Activated T-helper 1 cell treated with anti-CD3 and anti-CD28 coated beads, Interleukin-12 subunit alpha, Interleukin-12 subunit beta, Interleukin-2, Interleukin-4 antibody, amounts not matched to agents 30 ng/mL and 10 ng/mL and 1 ng/mL, durations not matched to agents 14 hours and 24 hours and 36 hours (primary cell): ENCODE measurements at regions of chr12 and their contacts with region 1.

Region 1: GRCh38 chr12:14769969-14770495 is 33.2 kb downstream of the WBP11 start:
- DNase-seq: peak; percentile 79
- H3K4me3 Mint-ChIP-seq: peak overlapping the region; percentile 86
- H3K27ac Mint-ChIP-seq: peak overlapping the region; percentile 97
- H3K4me1 Mint-ChIP-seq: peaks cover 61% of the 10 kb centered on the region
- H3K27me3 Mint-ChIP-seq: no peaks in the 10 kb centered on the region

Region 2: DNA sequence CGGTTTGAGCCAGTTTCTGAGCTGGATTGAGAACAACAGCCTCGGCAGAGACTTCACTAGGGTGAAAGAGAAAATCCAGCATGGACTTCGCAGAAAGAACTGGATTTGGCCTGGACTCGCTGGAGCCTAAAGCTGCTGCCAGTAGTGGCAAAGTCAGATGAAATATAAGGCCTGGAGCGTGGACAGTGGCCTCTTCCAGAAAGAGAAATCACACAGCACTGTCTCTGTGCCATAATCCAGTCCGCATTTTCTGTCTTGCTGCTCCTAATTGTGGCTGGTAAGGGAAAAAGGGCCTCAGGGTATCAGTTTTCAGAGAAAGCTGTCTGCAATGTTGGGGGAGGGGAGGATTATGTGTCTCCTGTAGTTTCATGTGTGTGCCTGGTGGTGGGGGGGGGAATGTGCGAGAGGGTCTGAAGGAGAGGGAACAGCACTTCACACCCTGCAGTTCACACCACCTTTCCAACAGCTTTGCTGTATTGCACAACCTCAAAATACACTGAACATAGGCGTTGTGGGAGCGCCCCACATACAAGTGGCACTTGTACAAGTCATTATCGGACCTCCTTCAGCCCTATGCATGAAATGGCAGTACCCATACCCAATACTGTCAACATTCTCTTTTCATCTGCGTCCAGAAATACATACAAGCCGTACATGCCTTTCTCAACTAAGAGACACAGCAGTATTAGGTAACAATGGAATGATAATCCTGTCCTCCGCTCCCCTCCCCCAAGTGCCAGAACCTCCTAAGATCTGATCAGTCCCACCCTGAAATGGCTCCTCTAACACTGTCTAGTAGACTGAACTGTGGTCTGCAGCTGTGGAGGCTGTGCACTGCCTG is 512.1 kb before region 1 on chr12:
- intact Hi-C with region 1: loop called (anchors 1 kb)
- DNase-seq: peak; percentile 87
- H3K4me3 Mint-ChIP-seq: peak overlapping the region; percentile 76
- H3K27ac Mint-ChIP-seq: peak overlapping the region; percentile 95
- H3K4me1 Mint-ChIP-seq: peaks cover 53% of the 10 kb centered on the region
- H3K27me3 Mint-ChIP-seq: no peaks in the 10 kb centered on the region

Region 3: DNA sequence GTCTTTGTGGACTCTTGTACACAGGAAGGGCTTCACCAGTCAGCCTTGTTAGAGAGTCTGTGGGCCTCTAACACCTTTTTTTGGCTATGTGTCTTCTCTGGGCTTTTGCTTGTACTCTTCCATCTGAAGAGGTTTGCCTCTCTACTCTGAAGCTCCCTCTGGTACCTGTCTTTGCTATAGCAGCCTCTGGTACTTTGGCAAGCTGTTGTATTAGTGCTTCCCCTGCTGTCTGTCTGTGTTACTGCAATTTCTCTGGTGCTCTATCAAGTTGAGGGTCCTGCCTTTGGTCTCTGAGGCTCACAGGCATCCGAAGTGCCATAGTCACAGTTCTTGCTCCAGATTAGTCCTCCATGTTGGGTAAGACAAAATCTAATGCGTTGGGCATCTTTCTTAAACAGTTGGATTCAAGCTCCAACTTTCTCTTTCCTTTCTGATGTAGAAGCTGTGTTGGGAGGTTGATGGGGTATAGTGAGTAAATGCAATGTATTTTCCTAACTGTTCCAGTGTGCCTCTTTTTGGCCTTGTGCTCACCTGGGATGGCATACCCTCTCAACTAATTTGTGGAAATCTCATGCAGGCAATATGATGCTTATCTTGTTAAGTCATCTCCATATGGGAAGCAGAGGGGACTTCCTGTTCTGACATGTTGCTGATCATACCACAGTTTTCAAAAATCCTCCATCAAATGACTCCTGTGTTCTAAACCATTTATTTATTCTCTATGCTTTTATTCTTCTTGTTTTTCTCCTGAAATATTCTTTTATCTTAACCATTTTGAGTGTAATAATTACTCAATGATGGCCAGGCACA is 315.7 kb before region 1 on chr12:
- intact Hi-C with region 1: loop called (anchors 10 kb)
- DNase-seq: peak; percentile 34
- H3K4me3 Mint-ChIP-seq: peak overlapping the region; percentile 46
- H3K27ac Mint-ChIP-seq: peak overlapping the region; percentile 84
- H3K4me1 Mint-ChIP-seq: peaks cover 54% of the 10 kb centered on the region
- H3K27me3 Mint-ChIP-seq: no peaks in the 10 kb centered on the region

Region 4: DNA sequence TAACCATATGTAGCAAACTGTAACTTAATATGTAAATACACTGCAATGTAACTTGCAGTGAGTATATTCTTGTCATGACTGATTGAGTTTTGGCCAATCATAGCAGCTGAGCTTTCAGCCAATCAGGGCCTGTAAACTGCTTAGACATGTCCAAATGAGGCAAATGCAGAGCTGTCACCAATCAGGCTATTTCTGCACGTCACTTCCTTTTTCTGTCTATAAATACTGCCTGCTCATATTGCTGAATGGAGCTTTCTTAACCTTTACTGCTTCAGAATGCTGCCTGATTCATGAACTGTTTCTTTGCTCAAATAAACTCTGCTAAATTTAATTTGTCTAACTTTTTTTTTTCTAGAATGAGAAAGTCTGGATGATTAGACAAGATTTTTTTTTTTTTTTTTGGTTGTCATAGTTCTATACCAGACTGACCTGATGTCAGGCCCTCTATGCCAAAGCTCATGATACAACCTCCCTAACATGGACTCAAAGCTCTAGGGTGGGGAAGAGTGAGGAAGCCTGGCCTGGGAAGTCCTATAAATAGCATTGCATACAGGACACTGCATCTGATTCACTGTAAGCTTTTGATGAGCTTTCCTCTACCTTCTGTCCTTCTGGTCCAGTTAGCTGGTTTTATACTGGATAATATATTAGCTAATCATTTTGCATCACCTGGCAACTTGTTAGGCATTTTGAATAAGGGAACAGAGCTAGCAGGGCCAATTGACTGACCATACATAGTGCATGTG is 103.6 kb after region 1 on chr12:
- intact Hi-C with region 1: no loop called
- DNase-seq: no peak
- H3K4me3 Mint-ChIP-seq: no peak overlapping the region
- H3K27ac Mint-ChIP-seq: no peak overlapping the region
- H3K4me1 Mint-ChIP-seq: no peaks in the 10 kb centered on the region
- H3K27me3 Mint-ChIP-seq: no peaks in the 10 kb centered on the region

Region 5: GRCh38 chr12:14892726-14893505 is 122.9 kb after region 1 on chr12:
- intact Hi-C with region 1: no loop called
- DNase-seq: no peak
- H3K4me3 Mint-ChIP-seq: no peak overlapping the region
- H3K27ac Mint-ChIP-seq: no peak overlapping the region
- H3K4me1 Mint-ChIP-seq: no peaks in the 10 kb centered on the region
- H3K27me3 Mint-ChIP-seq: peaks cover 7% of the 10 kb centered on the region

Region 6: GRCh38 chr12:14948672-14949071 is 178.6 kb after region 1 on chr12:
- intact Hi-C with region 1: loop called (anchors 1 kb)
- DNase-seq: peak; percentile 49
- H3K4me3 Mint-ChIP-seq: peak overlapping the region; percentile 79
- H3K27ac Mint-ChIP-seq: peak overlapping the region; percentile 99
- H3K4me1 Mint-ChIP-seq: peaks cover 90% of the 10 kb centered on the region
- H3K27me3 Mint-ChIP-seq: no peaks in the 10 kb centered on the region

Region 7: GRCh38 chr12:15700595-15700994 is 930.6 kb after region 1 on chr12:
- intact Hi-C with region 1: loop called (anchors 2 kb)
- DNase-seq: peak; percentile 14
- H3K4me3 Mint-ChIP-seq: peak overlapping the region; percentile 75
- H3K27ac Mint-ChIP-seq: peak overlapping the region; percentile 88
- H3K4me1 Mint-ChIP-seq: peaks cover 40% of the 10 kb centered on the region
- H3K27me3 Mint-ChIP-seq: no peaks in the 10 kb centered on the region